CD14-positive monocyte (primary cell): ENCODE measurements at regions of chr2 and their contacts with region 1.

Region 1: DNA sequence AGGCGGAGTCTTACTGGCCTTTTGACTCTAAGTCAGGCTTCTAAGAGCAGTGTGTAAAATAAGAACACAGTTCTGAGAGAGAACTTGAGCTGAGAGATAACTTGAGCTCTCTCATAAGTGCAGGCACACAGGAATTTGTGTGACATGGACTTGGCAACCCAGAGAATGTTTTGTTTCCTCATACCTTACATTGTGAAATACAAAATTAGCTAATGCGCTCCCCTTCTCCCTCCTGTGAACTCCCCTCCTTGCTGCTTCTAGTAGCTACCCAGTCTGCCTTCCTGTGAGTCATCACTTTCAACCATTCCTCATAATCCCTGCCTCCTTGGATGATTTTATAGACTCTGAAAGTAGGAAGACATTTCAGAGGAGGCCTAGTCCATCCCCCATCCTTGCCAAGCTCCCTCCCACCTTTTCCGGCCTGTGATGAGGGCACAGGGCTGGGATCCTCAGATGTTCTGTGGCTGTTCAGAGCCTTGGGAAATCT is 22.6 kb downstream of the FER1L5 start:
- DNase-seq: peak; percentile 91 to 97 (median 96)
- H3K4me3 ChIP-seq: peak overlapping the region in 1 of 3 experiments; percentile 34
- H3K4me3 Mint-ChIP-seq: peak overlapping the region; percentile 4 to 64
- H3K27ac ChIP-seq: peak overlapping the region; percentile 66 to 90
- H3K27ac Mint-ChIP-seq: peak overlapping the region; percentile 91 to 99 (median 96)
- H3K4me1 ChIP-seq: peaks cover 35 to 38% of the 10 kb centered on the region in 2 donors
- H3K4me1 Mint-ChIP-seq: peaks cover 29% of the 10 kb centered on the region
- H3K27me3 ChIP-seq: no peaks in the 10 kb centered on the region
- H3K27me3 Mint-ChIP-seq: peaks cover 0 to 5% (median 1%) of the 10 kb centered on the region in 3 donors
- CTCF ChIP-seq: no peak

Region 2: DNA sequence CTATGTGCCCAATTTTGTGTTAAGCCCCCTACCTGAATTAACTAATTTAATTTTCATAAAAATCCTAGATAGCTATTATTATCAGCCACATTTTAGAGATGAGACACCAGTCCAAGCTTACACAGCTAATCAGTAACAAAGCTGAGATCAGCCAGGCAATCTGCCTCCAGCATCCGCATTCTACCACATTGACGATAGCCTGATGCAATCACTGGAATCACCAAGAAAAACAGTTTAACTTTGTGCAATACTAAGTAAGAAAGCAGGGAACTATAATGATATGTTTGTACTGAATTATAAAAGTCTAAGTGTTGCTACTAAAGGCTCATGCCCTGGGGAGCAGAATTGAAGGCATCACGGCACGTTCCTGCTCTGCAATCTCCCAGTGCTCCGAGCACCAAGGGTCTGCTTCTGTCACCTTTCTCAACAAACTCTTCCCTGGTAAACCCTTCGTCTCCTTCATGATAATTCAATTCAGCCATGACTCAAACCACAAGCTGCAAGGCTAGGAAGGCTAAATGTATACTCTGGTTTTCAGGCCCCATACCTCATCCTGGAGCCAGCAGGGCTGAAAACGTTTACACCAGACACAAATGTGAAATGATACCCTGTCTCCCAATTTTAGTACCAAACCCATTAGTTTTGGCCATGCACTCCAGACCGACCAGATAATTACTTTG is 46.4 kb before region 1 on chr2:
- intact Hi-C with region 1: loop called in 1 of 2 experiments (anchors 10 kb)
- DNase-seq: peak; percentile 35 to 57 (median 43)
- H3K4me3 ChIP-seq: peak overlapping the region in 1 of 3 experiments; percentile 76
- H3K4me3 Mint-ChIP-seq: no peak overlapping the region
- H3K27ac ChIP-seq: peak overlapping the region; percentile 83 to 87
- H3K27ac Mint-ChIP-seq: peak overlapping the region; percentile 81 to 97 (median 90)
- H3K4me1 ChIP-seq: peaks cover 40 to 50% of the 10 kb centered on the region in 2 donors
- H3K4me1 Mint-ChIP-seq: peaks cover 49% of the 10 kb centered on the region
- H3K27me3 ChIP-seq: no peaks in the 10 kb centered on the region
- H3K27me3 Mint-ChIP-seq: peaks cover 0 to 2% (median 0%) of the 10 kb centered on the region in 3 donors
- CTCF ChIP-seq: no peak

Region 3: DNA sequence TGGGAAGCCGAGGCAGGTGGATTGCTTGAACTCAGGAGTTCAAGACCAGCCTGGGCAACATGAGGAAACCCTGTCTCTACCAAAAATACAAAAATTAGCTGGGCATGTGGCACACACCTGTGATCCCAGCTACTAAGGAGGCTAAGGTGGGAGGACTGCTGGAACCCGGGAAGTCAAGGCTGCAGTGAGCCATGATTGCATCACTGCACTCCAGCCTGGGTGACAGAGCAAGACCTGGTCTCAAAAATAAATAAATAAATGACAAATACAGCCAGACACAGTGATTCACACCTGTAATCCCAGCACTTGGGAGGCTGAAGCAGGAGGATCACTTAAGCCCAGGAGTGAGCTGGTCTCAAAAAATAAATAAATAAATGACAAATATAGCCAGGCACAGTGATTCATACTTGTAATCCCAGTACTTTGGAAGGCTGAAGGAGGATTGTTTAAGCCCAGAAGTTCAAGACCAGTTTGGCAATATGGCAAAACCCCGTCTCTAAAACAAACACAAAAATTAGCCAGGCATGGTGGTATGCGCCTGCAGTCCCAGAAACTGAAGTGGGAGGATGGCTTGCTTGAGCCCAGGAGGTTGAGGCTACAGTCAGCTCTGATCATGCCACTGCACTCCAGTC is 33.2 kb before region 1 on chr2:
- intact Hi-C with region 1: loop called in 1 of 2 experiments (anchors 5 kb)
- DNase-seq: no peak
- H3K4me3 ChIP-seq: no peak overlapping the region
- H3K4me3 Mint-ChIP-seq: no peak overlapping the region
- H3K27ac ChIP-seq: peak overlapping the region in 1 of 2 donors; percentile 18
- H3K27ac Mint-ChIP-seq: peak overlapping the region in 4 of 7 donors; percentile 13 to 63 (median 40)
- H3K4me1 ChIP-seq: peaks cover 13 to 24% of the 10 kb centered on the region in 2 donors
- H3K4me1 Mint-ChIP-seq: peaks cover 31% of the 10 kb centered on the region
- H3K27me3 ChIP-seq: no peaks in the 10 kb centered on the region
- H3K27me3 Mint-ChIP-seq: peaks cover 0 to 4% (median 1%) of the 10 kb centered on the region in 3 donors
- CTCF ChIP-seq: no peak